A673 (cell line): ENCODE measurements at regions of chr4 and their contacts with region 1.

Region 1: DNA sequence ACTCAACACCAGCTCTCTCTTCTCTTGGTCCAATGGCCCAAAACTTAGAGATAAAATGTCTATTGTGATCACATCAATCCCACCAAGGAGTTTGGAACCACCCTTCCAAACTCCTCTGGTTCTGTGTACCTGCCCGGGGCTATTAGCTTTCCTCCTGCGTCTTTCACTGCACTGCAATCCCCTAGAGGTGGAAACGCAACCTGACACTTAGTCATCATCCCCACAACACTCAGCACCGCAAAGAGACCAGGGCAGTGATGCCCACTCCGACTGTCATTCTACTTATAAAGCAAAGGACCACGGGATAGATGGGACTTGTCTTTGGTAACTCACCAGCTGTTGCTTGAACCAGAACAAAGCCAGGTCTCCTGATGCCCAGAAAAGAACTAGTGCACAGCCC is 22.0 kb downstream of the AFAP1 start:
- DNase-seq: no peak
- H3K4me3 ChIP-seq: no peak overlapping the region
- H3K27ac ChIP-seq: no peak overlapping the region
- H3K4me1 ChIP-seq: peaks cover 16% of the 10 kb centered on the region
- H3K27me3 ChIP-seq: no peaks in the 10 kb centered on the region
- CTCF ChIP-seq: no peak

Region 2: GRCh38 chr4:7808181-7808580 is 109.5 kb before region 1 on chr4:
- CTCF ChIA-PET with region 1: interaction called, 11 read pairs
- POLR2A ChIA-PET with region 1: no interaction called
- intact Hi-C with region 1: no loop called
- DNase-seq: no peak
- H3K4me3 ChIP-seq: no peak overlapping the region
- H3K27ac ChIP-seq: no peak overlapping the region
- H3K4me1 ChIP-seq: peaks cover 34% of the 10 kb centered on the region
- H3K27me3 ChIP-seq: no peaks in the 10 kb centered on the region
- CTCF ChIP-seq: no peak

Region 3: DNA sequence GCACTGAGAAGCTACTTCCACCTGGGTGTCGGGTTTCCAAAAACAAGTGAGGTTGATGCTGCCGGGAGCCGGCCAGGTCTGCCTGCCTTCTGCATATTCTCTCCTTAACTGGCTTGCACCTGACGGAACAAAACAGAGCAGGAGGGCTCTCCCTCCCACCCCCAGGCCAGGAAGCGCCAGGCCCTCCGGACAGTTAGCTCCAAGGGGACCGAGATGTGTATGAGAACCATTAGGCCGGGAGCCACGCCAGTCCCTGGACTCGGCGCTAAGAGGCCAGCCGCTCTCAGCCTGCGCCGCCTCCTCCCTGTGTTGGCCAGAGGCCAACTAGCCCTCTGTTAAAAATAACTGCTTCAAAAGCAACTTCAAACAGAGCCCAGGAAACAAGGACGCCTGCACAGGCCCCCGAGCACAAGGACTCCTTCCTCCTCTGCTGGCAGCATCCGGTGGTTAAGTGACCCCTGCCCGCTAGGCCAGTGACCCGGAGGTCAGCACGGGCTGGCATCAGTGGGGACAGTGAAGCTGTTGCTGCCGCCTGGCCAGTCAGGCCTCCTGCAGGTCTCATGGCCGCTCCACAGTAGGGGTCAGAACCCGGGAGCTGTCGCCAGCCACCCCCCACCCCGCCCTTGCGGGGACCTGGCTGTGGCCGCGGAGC is 133.0 kb after region 1 on chr4:
- CTCF ChIA-PET with region 1: no interaction called
- POLR2A ChIA-PET with region 1: no interaction called
- intact Hi-C with region 1: no loop called
- DNase-seq: peak; percentile 50
- H3K4me3 ChIP-seq: no peak overlapping the region
- H3K27ac ChIP-seq: peak overlapping the region; percentile 59
- H3K4me1 ChIP-seq: peaks cover 9% of the 10 kb centered on the region
- H3K27me3 ChIP-seq: no peaks in the 10 kb centered on the region
- CTCF ChIP-seq: no peak

Region 4: DNA sequence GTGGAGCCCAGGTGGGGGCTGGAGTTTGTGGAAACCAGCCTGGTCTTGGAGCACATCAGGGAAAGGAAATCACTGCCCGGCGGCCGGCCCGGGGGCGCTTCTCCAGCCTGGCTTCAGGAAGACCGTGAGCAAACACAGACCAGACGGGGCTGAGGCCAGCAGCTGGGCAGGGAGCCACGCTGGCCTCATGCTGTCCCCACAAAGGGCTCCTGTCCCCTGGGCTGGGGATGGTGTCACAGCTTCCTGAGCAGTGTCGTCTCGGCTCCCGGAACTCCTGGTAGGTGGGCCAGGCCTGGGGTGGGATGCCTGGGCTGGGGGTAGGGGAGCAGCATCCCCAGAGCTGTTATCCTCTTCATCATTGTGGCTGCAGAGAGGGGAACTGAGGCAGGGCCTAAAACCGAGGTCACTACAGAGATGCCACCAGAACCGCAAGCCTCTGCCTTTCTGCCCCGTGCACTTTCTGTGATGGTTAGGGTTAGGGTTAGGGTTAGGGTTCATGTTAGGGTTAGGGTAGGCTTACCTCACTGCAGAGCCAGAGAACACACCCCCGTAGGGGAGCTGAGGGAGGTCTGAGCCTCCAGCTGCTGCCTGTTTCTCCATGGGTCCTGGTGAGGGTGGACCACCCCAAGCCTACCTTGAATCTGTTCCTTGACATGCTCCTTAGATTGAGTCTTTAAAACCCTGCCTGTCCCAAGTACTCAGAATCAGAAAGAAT is 429.4 kb after region 1 on chr4:
- CTCF ChIA-PET with region 1: no interaction called
- POLR2A ChIA-PET with region 1: interaction called, 12 read pairs
- intact Hi-C with region 1: no loop called
- DNase-seq: no peak
- H3K4me3 ChIP-seq: no peak overlapping the region
- H3K27ac ChIP-seq: no peak overlapping the region
- H3K4me1 ChIP-seq: no peaks in the 10 kb centered on the region
- H3K27me3 ChIP-seq: peaks cover 8% of the 10 kb centered on the region
- CTCF ChIP-seq: no peak